BJ (cell line): ENCODE measurements at regions of chr7 and their contacts with region 1.

Region 1: GRCh38 chr7:55400191-55400590 is 35.1 kb downstream of the LANCL2 start:
- DNase-seq: no peak
- H3K4me3 ChIP-seq: no peak overlapping the region
- H3K27me3 ChIP-seq: no peaks in the 10 kb centered on the region
- CTCF ChIP-seq: no peak

Region 2: DNA sequence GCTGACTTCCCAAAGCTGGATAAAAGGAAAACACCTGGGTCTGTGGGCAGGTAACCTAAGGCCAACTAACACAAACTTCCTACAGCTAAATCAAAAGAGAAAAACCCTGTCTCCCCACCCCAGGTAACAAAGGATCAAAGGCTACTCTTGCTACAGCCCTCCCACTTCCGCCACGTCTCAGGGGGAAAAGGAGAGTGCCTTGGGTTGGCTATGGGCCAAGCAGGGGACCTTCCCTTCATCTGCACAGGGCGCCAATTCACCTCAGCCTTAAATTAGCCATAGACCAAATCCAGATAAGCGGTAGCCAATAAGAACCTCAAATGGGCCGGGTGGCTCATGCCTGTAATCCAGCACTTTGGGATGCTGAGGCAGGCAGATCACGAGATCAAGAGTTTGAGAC is 104.1 kb before region 1 on chr7:
- CTCF ChIA-PET with region 1: no interaction called
- POLR2A ChIA-PET with region 1: interaction called, 15 read pairs
- DNase-seq: no peak
- H3K4me3 ChIP-seq: no peak overlapping the region
- H3K27me3 ChIP-seq: peaks cover 6% of the 10 kb centered on the region
- CTCF ChIP-seq: no peak